ENCODE measurements at regions of chr14 and their contacts with region 1.

Region 1: GRCh38 chr14:30270200-30271161 is 288.5 kb upstream of the G2E3 start:
- DNase-seq: peak; percentile 61
- H3K4me3 ChIP-seq: peak overlapping the region; percentile 33
- H3K27ac ChIP-seq: no peak overlapping the region
- H3K27me3 ChIP-seq: no peaks in the 10 kb centered on the region
- CTCF ChIP-seq: peak; percentile 96

Region 2: DNA sequence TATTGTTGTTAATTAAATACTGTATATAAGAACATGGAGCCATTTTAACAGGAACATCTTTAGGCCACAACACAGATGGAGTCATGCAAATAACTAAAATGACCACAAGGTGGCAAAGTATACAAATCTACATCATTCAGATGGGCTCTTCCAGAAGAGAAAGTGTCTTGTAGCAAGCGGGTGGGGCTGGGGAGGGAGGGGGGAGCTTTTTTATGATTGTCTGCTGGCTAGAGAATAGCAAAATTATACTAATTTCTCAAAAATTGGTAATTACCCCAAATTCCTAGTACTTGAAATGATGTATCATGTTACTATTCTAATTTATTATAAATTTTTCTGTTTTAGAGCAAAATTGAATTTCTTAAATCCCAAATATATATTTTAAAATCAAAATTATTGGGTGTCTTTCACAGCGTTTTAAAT is 721.5 kb before region 1 on chr14:
- CTCF ChIA-PET with region 1: interaction called, 25 read pairs
- POLR2A ChIA-PET with region 1: no interaction called
- DNase-seq: peak; percentile 42
- H3K4me3 ChIP-seq: no peak overlapping the region
- H3K27ac ChIP-seq: no peak overlapping the region
- H3K27me3 ChIP-seq: no peaks in the 10 kb centered on the region
- CTCF ChIP-seq: peak; percentile 60

Region 3: DNA sequence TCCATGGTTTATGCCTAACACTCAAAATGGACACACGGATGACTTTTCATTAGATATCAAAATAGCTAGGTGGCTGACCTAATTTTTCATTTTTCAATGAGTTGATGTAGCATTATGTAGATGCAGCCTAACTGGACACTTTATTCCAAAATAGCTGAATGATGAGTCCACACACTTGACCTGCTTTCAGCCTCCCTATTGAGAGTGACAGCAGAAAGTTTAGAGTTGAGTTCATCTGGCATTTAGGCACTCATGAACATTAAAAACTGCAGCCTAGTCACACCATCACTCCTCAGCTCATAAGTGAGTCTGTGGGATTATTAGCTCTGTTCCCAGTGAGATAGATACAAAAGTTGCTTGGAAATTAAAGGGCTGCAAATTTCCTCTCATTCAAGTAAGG is 35.5 kb before region 1 on chr14:
- CTCF ChIA-PET with region 1: interaction called, 21 read pairs
- POLR2A ChIA-PET with region 1: no interaction called
- DNase-seq: no peak
- H3K4me3 ChIP-seq: no peak overlapping the region
- H3K27ac ChIP-seq: no peak overlapping the region
- H3K27me3 ChIP-seq: no peaks in the 10 kb centered on the region
- CTCF ChIP-seq: no peak

Region 4: GRCh38 chr14:30252783-30253674 is 17.5 kb before region 1 on chr14:
- CTCF ChIA-PET with region 1: interaction called, 125 read pairs
- POLR2A ChIA-PET with region 1: no interaction called
- DNase-seq: no peak
- H3K4me3 ChIP-seq: no peak overlapping the region
- H3K27ac ChIP-seq: no peak overlapping the region
- H3K27me3 ChIP-seq: no peaks in the 10 kb centered on the region
- CTCF ChIP-seq: no peak

Region 5: GRCh38 chr14:30291216-30291615 is 20.7 kb after region 1 on chr14:
- CTCF ChIA-PET with region 1: interaction called, 233 read pairs
- POLR2A ChIA-PET with region 1: no interaction called
- DNase-seq: no peak
- H3K4me3 ChIP-seq: no peak overlapping the region
- H3K27ac ChIP-seq: no peak overlapping the region
- H3K27me3 ChIP-seq: no peaks in the 10 kb centered on the region
- CTCF ChIP-seq: no peak

Measured in AG04450 (cell line).